Vagina (tissue), 2 donors: ENCODE measurements at regions of chr7 and their contacts with region 1.

Region 1: GRCh38 chr7:66681491-66682349 is 53.0 kb downstream of the KCTD7 start:
- DNase-seq: peak; percentile 81 to 97
- H3K4me3 ChIP-seq: peak overlapping the region; percentile 69 to 92
- H3K27ac ChIP-seq: peak overlapping the region; percentile 96
- H3K4me1 ChIP-seq: peaks cover 24% of the 10 kb centered on the region
- H3K27me3 ChIP-seq: no peaks in the 10 kb centered on the region
- CTCF ChIP-seq: no peak
- POLR2A ChIP-seq: peak; percentile 72 to 89

Region 2: DNA sequence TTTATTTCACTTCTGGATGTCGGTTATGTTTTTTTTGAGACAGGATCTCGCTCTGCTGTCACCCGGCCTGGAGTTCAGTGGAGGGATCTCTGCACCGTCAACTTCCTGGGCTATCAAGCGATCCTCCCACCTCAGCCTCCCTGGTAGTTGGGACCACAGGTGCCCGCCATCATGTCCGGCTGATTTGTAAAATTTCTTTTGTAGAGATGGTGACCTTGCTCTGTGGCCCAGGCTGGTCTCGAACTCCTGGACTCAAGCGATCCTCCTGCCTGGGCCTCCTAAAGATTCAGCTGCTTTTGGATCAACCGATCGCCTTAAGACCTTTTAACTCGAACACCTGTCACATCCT is 58.2 kb after region 1 on chr7:
- intact Hi-C with region 1: loop called (anchors 10 kb)
- DNase-seq: no peak
- H3K4me3 ChIP-seq: peak overlapping the region; percentile 87 to 93
- H3K27ac ChIP-seq: peak overlapping the region; percentile 97
- H3K4me1 ChIP-seq: peaks cover 43% of the 10 kb centered on the region
- H3K27me3 ChIP-seq: no peaks in the 10 kb centered on the region
- CTCF ChIP-seq: no peak
- POLR2A ChIP-seq: no peak

Region 3: GRCh38 chr7:66758950-66759628 is 77.4 kb after region 1 on chr7:
- intact Hi-C with region 1: no loop called
- DNase-seq: no peak
- H3K4me3 ChIP-seq: no peak overlapping the region
- H3K27ac ChIP-seq: no peak overlapping the region
- H3K4me1 ChIP-seq: peaks cover 5% of the 10 kb centered on the region
- H3K27me3 ChIP-seq: no peaks in the 10 kb centered on the region
- CTCF ChIP-seq: no peak
- POLR2A ChIP-seq: no peak